Pancreas (tissue), 10 donors: ENCODE measurements at regions of chr6 and their contacts with region 1.

Region 1: GRCh38 chr6:41675176-41675770 is 37.0 kb downstream of the MDFI start:
- DNase-seq: peak in 1 of 6 donors; percentile 35
- ATAC-seq: peak in 2 of 4 donors; percentile 29 to 50
- H3K4me3 ChIP-seq: no peak overlapping the region
- H3K27ac ChIP-seq: no peak overlapping the region
- H3K4me1 ChIP-seq: no peaks in the 10 kb centered on the region
- H3K27me3 ChIP-seq: no peaks in the 10 kb centered on the region
- CTCF ChIP-seq: no peak

Region 2: DNA sequence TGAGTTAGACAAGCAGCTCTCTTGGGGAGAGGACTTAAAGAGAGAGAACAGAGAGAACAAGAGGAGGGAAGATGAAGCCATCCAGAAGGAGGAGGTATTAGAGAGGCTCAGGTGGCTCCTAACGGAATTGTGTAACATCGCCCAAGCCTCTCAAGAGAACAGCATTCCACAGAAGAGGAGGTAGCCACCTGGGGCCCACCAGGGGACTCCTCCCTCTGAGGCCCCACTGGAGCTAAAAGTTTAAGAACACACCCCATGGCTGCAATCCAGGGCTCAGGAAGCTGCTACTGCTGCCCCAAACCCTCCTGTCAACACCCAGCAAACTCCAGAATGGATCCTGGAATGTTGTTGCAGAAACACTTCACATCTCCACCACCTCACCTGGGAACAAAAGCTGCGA is 60.5 kb before region 1 on chr6:
- intact Hi-C with region 1: loop called in 2 of 3 experiments (anchors 5 to 10 kb)
- DNase-seq: no peak
- ATAC-seq: no peak
- H3K4me3 ChIP-seq: no peak overlapping the region
- H3K27ac ChIP-seq: no peak overlapping the region
- H3K4me1 ChIP-seq: no peaks in the 10 kb centered on the region
- H3K27me3 ChIP-seq: no peaks in the 10 kb centered on the region
- CTCF ChIP-seq: no peak